ENCODE measurements at regions of chr1 and their contacts with region 1.

Region 1: GRCh38 chr1:28877132-28877781 is 37.1 kb upstream of the EPB41 start:
- DNase-seq: peak; percentile 28
- ATAC-seq: peak; percentile 84
- H3K4me3 ChIP-seq: no peak overlapping the region
- H3K27ac ChIP-seq: no peak overlapping the region
- H3K4me1 ChIP-seq: no peaks in the 10 kb centered on the region
- H3K27me3 ChIP-seq: no peaks in the 10 kb centered on the region
- CTCF ChIP-seq: peak; percentile 89 to 96 (median 93)
- EP300 ChIP-seq: no peak
- POLR2A ChIP-seq: no peak
- RAD21 ChIP-seq: peak; percentile 97

Region 2: GRCh38 chr1:28369371-28370238 is 507.7 kb before region 1 on chr1 and contains the start of gene PHACTR4:
- CTCF ChIA-PET with region 1: interaction called, 3 read pairs
- POLR2A ChIA-PET with region 1: no interaction called
- RAD21 ChIA-PET with region 1: no interaction called
- SMC1A ChIA-PET with region 1: interaction called, 3 read pairs
- in situ Hi-C with region 1: loop called (anchors 10 kb)
- intact Hi-C with region 1: no loop called
- DNase-seq: peak; percentile 61
- ATAC-seq: peak; percentile 94
- H3K4me3 ChIP-seq: peak within 1 kb of the TSS; percentile 90
- H3K27ac ChIP-seq: peak within 1 kb of the TSS; percentile 85
- H3K4me1 ChIP-seq: peaks cover 13% of the 10 kb centered on the region
- H3K27me3 ChIP-seq: no peaks in the 10 kb centered on the region
- CTCF ChIP-seq: 0 out of 6 replicates have a peak, but pooled peaks of 1 of the 3 experiments have one; percentile 20
- EP300 ChIP-seq: 0 out of 4 replicates have a peak, but pooled peaks of 1 of the 2 experiments have one; percentile 17
- POLR2A ChIP-seq: peak; percentile 79
- RAD21 ChIP-seq: no peak
- polyA plus RNA-seq, gene PHACTR4: 8.9 to 9.3 TPM

Region 3: DNA sequence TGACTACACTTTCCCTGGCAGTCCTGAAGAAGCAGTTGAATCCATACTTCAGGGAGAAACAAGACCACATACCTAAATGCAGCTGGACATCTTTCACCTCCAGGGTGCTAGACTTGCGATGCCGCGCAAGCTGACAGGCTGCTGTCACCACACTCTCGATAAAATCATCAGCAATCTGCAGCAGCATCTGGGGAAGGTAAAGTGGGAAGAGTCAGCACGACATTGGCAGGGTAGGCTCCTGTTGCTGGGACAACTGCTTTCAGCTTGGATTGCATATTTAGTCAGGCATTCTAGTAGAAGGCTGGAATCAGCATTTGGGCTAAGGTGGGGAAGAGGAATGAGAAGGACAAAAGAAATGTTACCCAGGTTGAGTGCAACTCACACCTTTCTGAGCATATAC is 264.1 kb before region 1 on chr1:
- CTCF ChIA-PET with region 1: interaction called, 10 read pairs
- POLR2A ChIA-PET with region 1: no interaction called
- RAD21 ChIA-PET with region 1: no interaction called
- SMC1A ChIA-PET with region 1: interaction called, 3 read pairs
- in situ Hi-C with region 1: no loop called
- intact Hi-C with region 1: no loop called
- DNase-seq: no peak
- ATAC-seq: no peak
- H3K4me3 ChIP-seq: no peak overlapping the region
- H3K27ac ChIP-seq: no peak overlapping the region
- H3K4me1 ChIP-seq: no peaks in the 10 kb centered on the region
- H3K27me3 ChIP-seq: no peaks in the 10 kb centered on the region
- CTCF ChIP-seq: no peak
- EP300 ChIP-seq: no peak
- POLR2A ChIP-seq: no peak
- RAD21 ChIP-seq: no peak

Region 4: GRCh38 chr1:28736450-28737306 is 140.6 kb before region 1 on chr1 and contains the start of gene YTHDF2:
- CTCF ChIA-PET with region 1: interaction called, 12 read pairs
- POLR2A ChIA-PET with region 1: interaction called, 3 read pairs
- RAD21 ChIA-PET with region 1: interaction called, 3 read pairs
- SMC1A ChIA-PET with region 1: interaction called, 5 read pairs
- in situ Hi-C with region 1: no loop called
- intact Hi-C with region 1: no loop called
- DNase-seq: peak; percentile 78
- ATAC-seq: peak; percentile 95
- H3K4me3 ChIP-seq: peak within 1 kb of the TSS; percentile 100
- H3K27ac ChIP-seq: peak within 1 kb of the TSS; percentile 92
- H3K4me1 ChIP-seq: peaks cover 7% of the 10 kb centered on the region; the same call in 1 of the 2 replicates
- H3K27me3 ChIP-seq: no peaks in the 10 kb centered on the region
- CTCF ChIP-seq: peak; percentile 83 to 89 (median 88)
- EP300 ChIP-seq: peak in 1 of 2 experiments; percentile 24; a peak in 1 of 4 replicates
- POLR2A ChIP-seq: peak; percentile 94
- RAD21 ChIP-seq: 0 out of 2 replicates have a peak, but pooled peaks have one; percentile 7
- polyA plus RNA-seq, gene YTHDF2: 42.4 to 44.0 TPM

Region 5: GRCh38 chr1:28792644-28793121 is 84.6 kb before region 1 on chr1:
- CTCF ChIA-PET with region 1: interaction called, 268 read pairs
- POLR2A ChIA-PET with region 1: no interaction called
- RAD21 ChIA-PET with region 1: interaction called, 9 read pairs
- SMC1A ChIA-PET with region 1: interaction called, 107 read pairs
- in situ Hi-C with region 1: loop called (anchors 5 kb)
- intact Hi-C with region 1: no loop called
- DNase-seq: no peak
- ATAC-seq: peak; percentile 38; the same call in 2 of the 3 replicates
- H3K4me3 ChIP-seq: no peak overlapping the region
- H3K27ac ChIP-seq: no peak overlapping the region
- H3K4me1 ChIP-seq: no peaks in the 10 kb centered on the region
- H3K27me3 ChIP-seq: no peaks in the 10 kb centered on the region; a peak in 1 of 4 replicates
- CTCF ChIP-seq: peak in 1 of 3 experiments; percentile 23; a peak in 2 of 6 replicates
- EP300 ChIP-seq: no peak
- POLR2A ChIP-seq: no peak
- RAD21 ChIP-seq: no peak

Region 6: DNA sequence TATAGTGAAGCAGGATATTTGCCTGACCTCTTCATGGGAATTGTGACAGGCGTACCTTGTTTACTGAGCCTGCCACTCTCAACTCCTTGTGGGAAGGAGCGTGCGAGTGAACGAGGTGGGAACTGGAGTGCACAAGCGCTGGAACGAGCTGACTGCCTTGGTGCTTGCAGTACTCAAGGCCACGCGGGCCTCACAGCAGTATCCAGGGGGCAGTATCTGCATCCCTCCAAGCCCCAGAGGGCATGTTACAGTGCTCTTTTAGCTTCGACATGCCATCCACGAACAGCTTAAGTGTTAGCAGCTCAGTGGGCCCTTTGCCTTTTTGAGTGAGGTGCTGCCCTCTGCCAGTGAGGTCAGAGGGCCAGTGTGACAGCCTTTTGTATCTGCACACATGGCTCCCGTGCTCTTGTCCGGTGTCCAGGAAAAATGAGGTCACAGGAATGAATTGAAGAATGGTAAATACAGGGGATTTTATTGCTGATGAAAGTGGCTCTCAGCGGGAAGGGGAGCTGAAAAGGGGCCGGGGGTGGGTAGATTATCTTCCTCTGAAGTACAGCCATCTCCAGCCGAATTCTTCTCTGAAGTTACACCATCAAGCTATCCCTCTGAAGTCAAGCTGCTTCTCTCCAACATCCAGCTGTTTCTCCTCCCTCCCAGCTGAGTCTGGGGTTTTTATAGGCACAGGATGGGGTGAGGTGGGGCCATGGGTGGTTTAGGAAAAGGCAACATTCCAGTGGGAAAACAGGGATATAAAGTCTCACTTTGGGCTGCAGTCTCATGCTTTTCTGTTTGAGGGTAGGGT is 106.5 kb after region 1 on chr1:
- CTCF ChIA-PET with region 1: no interaction called
- POLR2A ChIA-PET with region 1: no interaction called
- RAD21 ChIA-PET with region 1: no interaction called
- SMC1A ChIA-PET with region 1: no interaction called
- in situ Hi-C with region 1: no loop called
- intact Hi-C with region 1: no loop called
- DNase-seq: no peak
- ATAC-seq: no peak
- H3K4me3 ChIP-seq: no peak overlapping the region
- H3K27ac ChIP-seq: no peak overlapping the region
- H3K4me1 ChIP-seq: peaks cover 8% of the 10 kb centered on the region
- H3K27me3 ChIP-seq: no peaks in the 10 kb centered on the region
- CTCF ChIP-seq: no peak
- EP300 ChIP-seq: no peak
- POLR2A ChIP-seq: no peak
- RAD21 ChIP-seq: no peak

Region 7: DNA sequence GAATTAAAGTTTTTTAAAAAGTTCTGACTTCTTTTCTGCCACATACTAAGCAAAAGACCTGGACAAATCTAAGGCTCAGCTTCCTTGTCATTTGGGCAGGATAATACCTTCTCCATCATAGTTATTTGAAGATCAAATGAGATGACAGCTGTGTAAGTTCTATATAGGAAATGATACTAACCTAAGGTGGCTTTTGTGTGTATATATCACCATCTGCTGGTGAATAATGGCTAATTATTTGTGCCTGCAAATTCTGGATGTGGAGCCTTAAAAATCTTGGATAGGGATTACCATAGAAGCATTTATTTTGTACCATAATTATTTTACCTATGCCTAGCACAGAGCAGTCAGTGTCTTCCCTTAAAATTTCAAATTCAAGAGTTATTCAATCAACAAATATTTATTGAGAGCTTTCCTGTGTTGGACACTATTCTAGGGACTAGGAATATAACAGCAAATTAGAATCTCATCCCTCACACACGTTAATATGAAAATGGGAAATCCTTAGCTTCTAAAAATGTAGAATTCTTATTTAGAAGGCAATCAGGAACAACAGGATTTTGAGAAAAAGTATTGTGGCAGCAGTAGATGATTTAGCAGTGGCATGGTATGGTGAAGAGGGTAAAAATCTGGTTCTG is 156.7 kb after region 1 on chr1:
- CTCF ChIA-PET with region 1: interaction called, 547 read pairs
- POLR2A ChIA-PET with region 1: interaction called, 4 read pairs
- RAD21 ChIA-PET with region 1: interaction called, 284 read pairs
- SMC1A ChIA-PET with region 1: interaction called, 315 read pairs
- in situ Hi-C with region 1: loop called (anchors 5 kb)
- intact Hi-C with region 1: loop called (anchors 1 kb)
- DNase-seq: peak; percentile 11
- ATAC-seq: peak; percentile 61; the same call in 2 of the 3 replicates
- H3K4me3 ChIP-seq: no peak overlapping the region
- H3K27ac ChIP-seq: no peak overlapping the region
- H3K4me1 ChIP-seq: no peaks in the 10 kb centered on the region
- H3K27me3 ChIP-seq: no peaks in the 10 kb centered on the region
- CTCF ChIP-seq: peak; percentile 44 to 74 (median 52); a peak in 4 of 6 replicates
- EP300 ChIP-seq: no peak
- POLR2A ChIP-seq: no peak
- RAD21 ChIP-seq: peak; percentile 93

Region 8: DNA sequence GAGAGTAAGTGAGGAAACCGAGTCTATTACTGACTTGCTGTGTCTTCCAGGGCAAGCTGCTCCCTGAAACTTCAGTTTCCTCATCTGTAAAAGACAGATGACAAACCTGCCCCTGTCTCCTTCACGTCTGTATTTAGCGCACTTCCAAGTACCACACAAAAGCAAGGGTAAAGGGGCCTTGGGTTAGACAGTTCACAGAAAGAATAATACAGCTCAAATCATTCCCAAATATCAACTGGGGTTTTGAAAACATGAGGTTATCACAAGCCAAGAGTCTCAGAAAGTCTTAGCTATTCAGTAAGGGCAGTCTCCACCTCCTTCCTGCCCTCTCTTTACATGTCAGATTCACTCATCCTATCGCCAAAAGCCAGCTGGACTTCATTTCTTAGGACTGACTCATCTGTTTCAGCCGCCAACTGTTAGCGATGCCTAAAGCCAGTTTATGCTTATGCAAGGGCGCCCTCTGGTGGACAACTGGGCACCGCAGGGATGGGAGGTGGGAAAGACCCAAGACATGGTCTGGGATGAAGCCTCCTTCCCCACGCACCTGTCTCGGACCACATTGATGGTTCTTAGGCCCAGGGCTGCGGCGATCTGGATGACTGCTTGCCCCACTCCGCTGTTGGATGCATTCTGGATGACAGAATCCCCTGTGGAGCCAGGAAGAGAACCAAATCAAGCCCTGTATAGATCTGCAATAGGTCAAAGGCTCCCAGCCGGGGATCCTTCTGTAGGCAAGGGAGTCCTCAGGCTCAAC is 325.5 kb after region 1 on chr1:
- CTCF ChIA-PET with region 1: interaction called, 173 read pairs
- POLR2A ChIA-PET with region 1: interaction called, 3 read pairs
- RAD21 ChIA-PET with region 1: interaction called, 91 read pairs
- SMC1A ChIA-PET with region 1: interaction called, 127 read pairs
- in situ Hi-C with region 1: loop called (anchors 5 kb)
- intact Hi-C with region 1: loop called (anchors 1 kb)
- DNase-seq: peak; percentile 47
- ATAC-seq: peak; percentile 100
- H3K4me3 ChIP-seq: no peak overlapping the region
- H3K27ac ChIP-seq: no peak overlapping the region
- H3K4me1 ChIP-seq: peaks cover 3% of the 10 kb centered on the region; the same call in 1 of the 2 replicates
- H3K27me3 ChIP-seq: no peaks in the 10 kb centered on the region
- CTCF ChIP-seq: peak; percentile 93 to 99 (median 97); a peak in 5 of 6 replicates
- EP300 ChIP-seq: no peak
- POLR2A ChIP-seq: no peak
- RAD21 ChIP-seq: peak; percentile 96